Dorsolateral prefrontal cortex (tissue), 120 donors: ENCODE measurements at regions of chr12 and their contacts with region 1.

Region 1: DNA sequence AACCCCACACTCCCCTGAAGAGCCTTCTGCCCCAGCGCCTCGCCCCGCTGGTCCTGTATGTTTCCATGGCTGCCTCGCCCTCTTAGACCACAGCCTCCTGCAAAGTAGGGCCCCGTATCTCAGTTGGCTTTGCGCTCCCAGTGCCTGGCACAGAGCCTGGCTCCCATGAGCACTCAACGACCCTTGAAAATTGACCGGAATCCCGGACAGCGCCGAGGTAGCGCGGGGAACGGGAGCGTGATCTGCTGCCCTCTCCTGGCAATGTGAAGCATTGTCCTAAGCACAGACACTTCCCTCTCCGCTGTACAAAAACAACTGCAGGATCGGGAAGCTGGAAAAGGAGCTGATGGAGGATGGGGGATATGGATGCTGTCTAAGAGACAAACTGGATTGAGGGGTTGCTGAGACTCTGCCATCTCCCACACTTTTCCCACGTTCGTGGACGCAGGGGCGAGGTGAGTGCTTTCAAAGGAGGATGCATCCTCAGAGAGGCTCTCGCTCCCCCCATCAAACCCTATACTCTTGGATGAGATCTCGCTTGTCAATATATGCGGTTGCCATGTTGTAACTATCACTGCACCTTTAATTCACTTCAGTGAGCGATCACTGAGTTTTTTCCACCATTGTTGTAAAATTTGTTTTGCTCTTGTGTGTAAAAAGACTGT is 10.7 kb upstream of the FKBP4 start:
- DNase-seq: peak in 9 of 10 donors; percentile 48 to 82 (median 71)
- H3K4me3 ChIP-seq: peak overlapping the region; percentile 26 to 72 (median 53)
- H3K27ac ChIP-seq: peak overlapping the region in 53 of 59 donors; percentile 14 to 91 (median 75)
- H3K27me3 ChIP-seq: no peaks in the 10 kb centered on the region
- CTCF ChIP-seq: peak; percentile 55 to 95 (median 89)

Region 2: DNA sequence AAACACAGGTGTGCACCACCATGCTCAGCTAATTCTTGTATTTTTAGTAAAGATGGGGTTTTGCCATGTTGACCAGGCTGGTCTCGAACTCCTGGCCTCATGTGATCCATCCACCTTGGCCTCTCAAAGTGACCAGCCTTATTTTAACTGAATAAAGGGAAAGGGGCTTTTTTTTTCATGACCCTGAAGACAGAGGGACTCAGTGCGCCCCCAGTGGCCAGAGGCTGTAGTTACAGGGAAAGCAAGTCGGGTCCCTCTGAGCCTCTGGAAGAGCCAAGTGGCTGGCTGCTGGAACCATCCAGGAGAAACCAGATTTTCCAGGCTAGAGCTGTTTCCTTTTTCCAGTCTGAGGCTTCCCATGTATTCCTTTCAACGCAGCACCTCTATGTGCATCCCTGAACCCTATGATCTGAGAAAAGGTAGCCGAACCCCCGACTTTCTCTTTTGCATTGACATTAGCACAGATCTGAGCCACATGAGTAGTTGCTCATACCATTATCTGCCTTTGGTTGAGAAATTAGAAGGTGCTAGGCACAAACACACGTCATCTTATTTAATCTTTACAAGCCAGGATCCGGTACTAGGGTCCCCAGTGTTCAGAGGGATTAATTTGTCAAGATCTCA is 388.6 kb before region 1 on chr12:
- intact Hi-C with region 1: loop called in 1 of 2 experiments (anchors 5 kb)
- DNase-seq: peak in 1 of 10 donors; percentile 28
- H3K4me3 ChIP-seq: no peak overlapping the region
- H3K27ac ChIP-seq: peak overlapping the region in 1 of 59 donors; percentile 3
- H3K27me3 ChIP-seq: no peaks in the 10 kb centered on the region
- CTCF ChIP-seq: peak in 55 of 56 donors; percentile 24 to 74 (median 62)

Region 3: DNA sequence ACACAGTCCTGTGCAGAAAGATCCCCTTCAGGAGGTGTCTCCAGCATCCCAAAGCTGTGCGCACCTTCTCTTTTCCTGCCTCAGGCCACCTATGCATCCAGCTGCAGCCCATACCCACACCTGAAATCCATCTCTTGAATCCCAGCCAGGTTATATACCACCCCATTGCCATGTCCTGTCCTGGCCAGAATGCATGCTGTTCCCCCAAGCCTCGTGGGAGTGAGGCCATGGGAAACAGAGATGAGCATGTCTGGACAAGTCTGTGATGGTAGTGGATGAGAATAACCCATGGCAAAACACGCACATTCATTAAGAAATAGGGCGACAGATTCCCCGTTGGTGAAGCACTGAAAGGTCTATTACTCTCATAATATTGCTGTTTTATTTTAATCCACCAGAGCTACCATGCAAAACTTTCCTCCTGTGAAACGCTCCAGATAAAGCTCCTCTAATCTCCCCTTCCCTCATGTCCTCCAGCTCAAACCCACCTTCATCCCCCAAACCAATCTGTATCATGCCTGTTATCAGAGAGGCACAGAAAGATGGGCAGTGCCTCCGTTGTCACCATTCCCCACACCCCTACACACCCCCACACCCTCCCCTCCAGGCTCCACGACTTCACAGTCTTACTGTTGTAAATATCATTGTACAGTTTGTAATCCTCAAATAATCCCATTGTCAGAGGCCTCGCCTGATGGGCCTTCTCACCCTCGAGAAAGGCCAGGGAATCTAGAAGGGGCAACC is 86.8 kb before region 1 on chr12:
- intact Hi-C with region 1: no loop called
- DNase-seq: no peak
- H3K4me3 ChIP-seq: no peak overlapping the region
- H3K27ac ChIP-seq: no peak overlapping the region
- H3K27me3 ChIP-seq: peaks cover 0 to 10% (median 0%) of the 10 kb centered on the region in 45 donors
- CTCF ChIP-seq: no peak

Region 4: DNA sequence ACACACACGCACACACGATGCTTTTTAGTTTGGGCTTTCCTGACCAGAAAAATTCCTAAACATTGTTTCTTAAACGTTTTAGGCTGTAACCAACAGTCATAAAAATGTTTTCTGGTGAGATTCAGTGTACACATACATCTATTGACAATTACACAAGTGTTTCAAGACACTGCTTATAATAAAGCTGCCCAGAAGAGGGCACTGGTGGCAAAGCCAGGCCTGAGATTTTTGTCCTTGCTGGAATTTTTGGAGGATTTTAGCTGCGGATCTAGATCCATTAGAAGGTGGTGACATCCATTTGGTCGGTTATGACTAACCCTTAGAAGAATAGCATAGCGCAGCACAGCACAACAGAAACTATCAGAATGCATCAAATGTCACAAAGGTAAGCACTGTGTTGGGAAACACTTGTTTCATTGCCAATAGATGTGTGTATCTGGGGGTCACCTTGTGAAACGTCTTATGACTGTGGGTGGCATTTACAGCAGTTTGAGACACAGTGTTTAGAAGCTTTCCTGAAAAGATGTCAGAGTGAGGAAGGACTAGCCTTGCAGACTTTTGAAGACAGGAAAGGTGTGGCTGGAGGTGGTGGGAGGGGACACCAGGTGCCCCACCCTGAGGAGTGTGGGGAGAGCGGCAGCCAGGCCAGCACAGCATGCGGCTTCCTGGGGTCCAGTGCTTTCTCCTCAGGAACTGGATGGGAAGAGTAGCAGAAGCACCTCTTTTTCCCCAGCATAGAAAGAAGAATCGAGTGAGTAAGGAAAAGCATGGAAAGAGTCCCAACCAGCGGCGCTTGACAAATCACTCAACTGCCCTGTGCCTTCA is 44.0 kb before region 1 on chr12:
- intact Hi-C with region 1: loop called in 1 of 2 experiments (anchors 5 kb)
- DNase-seq: peak in 4 of 10 donors; percentile 37 to 61 (median 52)
- H3K4me3 ChIP-seq: peak overlapping the region in 29 of 59 donors; percentile 1 to 52 (median 25)
- H3K27ac ChIP-seq: peak overlapping the region in 5 of 59 donors; percentile 7 to 66 (median 57)
- H3K27me3 ChIP-seq: peaks cover 0 to under 1% (median 0%) of the 10 kb centered on the region in 45 donors
- CTCF ChIP-seq: peak in 55 of 56 donors; percentile 39 to 73 (median 60)